Astrocyte of the cerebellum (primary cell): ENCODE measurements at regions of chr3 and their contacts with region 1.

Region 1: DNA sequence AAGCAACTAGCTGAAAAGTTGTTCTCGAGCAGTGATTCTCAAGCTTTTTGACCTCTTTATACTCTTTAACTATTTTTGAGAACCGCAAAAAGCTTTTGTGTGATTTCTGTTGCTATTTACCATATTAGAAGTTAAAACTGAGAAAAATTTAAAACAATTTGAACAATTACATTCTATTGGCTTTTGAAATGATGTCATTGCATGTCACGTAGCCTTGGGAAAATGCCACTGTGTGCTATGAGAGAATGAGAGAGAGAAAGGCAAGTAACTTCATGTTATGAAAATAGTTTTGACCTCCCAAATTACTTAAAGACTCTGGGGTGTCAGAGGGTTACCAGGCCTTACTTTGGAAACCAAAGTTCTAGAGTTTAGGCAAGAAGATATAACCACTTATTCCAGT is 8.0 kb downstream of the USP13 start:
- DNase-seq: no peak
- H3K4me3 ChIP-seq: no peak overlapping the region
- CTCF ChIP-seq: no peak

Region 2: GRCh38 chr3:179604321-179605078 is 56.4 kb before region 1 on chr3 and contains the starts of genes MRPL47 and NDUFB5:
- in situ Hi-C with region 1: loop called (anchors 5 kb)
- DNase-seq: peak; percentile 97
- H3K4me3 ChIP-seq: peak within 1 kb of the TSS; percentile 85
- CTCF ChIP-seq: no peak

Region 3: GRCh38 chr3:179695672-179696313 is 34.9 kb after region 1 on chr3:
- in situ Hi-C with region 1: loop called (anchors 5 kb)
- DNase-seq: no peak
- H3K4me3 ChIP-seq: no peak overlapping the region
- CTCF ChIP-seq: no peak

Region 4: GRCh38 chr3:179706233-179706632 is 45.4 kb after region 1 on chr3:
- in situ Hi-C with region 1: no loop called
- DNase-seq: no peak
- H3K4me3 ChIP-seq: no peak overlapping the region
- CTCF ChIP-seq: no peak